Ovary (tissue), 10 donors: ENCODE measurements at regions of chr9 and their contacts with region 1.

Region 1: GRCh38 chr9:89323390-89323789 is 5.1 kb downstream of the SECISBP2 start:
- DNase-seq: peak in 1 of 5 donors; percentile 21
- H3K4me3 ChIP-seq: no peak overlapping the region
- H3K27ac ChIP-seq: no peak overlapping the region
- H3K4me1 ChIP-seq: peaks cover 12% of the 10 kb centered on the region
- H3K27me3 ChIP-seq: no peaks in the 10 kb centered on the region
- CTCF ChIP-seq: no peak
- EP300 ChIP-seq: no peak
- POLR2A ChIP-seq: no peak

Region 2: GRCh38 chr9:89375191-89375760 is 51.9 kb after region 1 on chr9:
- intact Hi-C with region 1: loop called in 1 of 4 experiments (anchors 10 kb)
- DNase-seq: no peak
- H3K4me3 ChIP-seq: no peak overlapping the region
- H3K27ac ChIP-seq: no peak overlapping the region
- H3K4me1 ChIP-seq: no peaks in the 10 kb centered on the region
- H3K27me3 ChIP-seq: no peaks in the 10 kb centered on the region
- CTCF ChIP-seq: no peak
- EP300 ChIP-seq: no peak
- POLR2A ChIP-seq: no peak

Region 3: DNA sequence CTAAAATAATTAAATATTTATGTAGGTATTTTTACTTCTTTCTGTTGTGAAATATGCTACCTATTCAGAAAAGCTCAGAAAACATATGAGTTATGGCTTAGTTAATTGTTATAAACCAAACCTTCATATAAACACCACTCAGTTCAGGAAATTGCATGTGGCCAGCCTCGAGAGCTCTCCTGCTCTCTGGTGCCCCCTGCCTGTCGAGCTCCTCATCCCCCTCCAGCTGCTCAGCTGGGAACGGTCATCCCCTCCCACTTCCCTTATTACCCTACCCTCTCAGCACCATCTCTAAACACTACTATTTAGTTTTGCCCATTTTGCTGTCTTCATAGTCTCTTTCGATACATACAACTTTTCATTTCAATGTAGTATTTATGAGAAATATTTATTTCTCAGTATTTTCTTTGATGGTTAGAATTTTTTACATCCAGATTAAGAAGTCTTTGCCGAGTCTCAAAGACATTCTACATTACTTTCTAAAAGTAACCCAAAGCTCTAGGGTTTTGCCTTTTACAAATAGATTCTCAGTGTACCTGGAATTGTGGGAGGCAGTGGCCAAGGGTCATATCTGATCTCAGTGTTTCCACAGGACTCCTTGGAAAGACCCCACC is 225.7 kb after region 1 on chr9:
- intact Hi-C with region 1: loop called in 1 of 4 experiments (anchors 10 kb)
- DNase-seq: peak; percentile 57 to 83 (median 71)
- H3K4me3 ChIP-seq: no peak overlapping the region
- H3K27ac ChIP-seq: no peak overlapping the region
- H3K4me1 ChIP-seq: no peaks in the 10 kb centered on the region
- H3K27me3 ChIP-seq: no peaks in the 10 kb centered on the region
- CTCF ChIP-seq: peak in 2 of 3 donors; percentile 32 to 41
- EP300 ChIP-seq: no peak
- POLR2A ChIP-seq: no peak